ENCODE measurements at regions of chr12 and their contacts with region 1.

Region 1: GRCh38 chr12:121668750-121669520 is 519 bp downstream of the MORN3 start:
- DNase-seq: peak; percentile 81
- ATAC-seq: no peak
- H3K4me3 Mint-ChIP-seq: no peak overlapping the region
- H3K27ac Mint-ChIP-seq: peak overlapping the region; percentile 2
- H3K4me1 Mint-ChIP-seq: peaks cover 48% of the 10 kb centered on the region
- H3K27me3 Mint-ChIP-seq: no peaks in the 10 kb centered on the region
- CTCF ChIP-seq: peak; percentile 80

Region 2: DNA sequence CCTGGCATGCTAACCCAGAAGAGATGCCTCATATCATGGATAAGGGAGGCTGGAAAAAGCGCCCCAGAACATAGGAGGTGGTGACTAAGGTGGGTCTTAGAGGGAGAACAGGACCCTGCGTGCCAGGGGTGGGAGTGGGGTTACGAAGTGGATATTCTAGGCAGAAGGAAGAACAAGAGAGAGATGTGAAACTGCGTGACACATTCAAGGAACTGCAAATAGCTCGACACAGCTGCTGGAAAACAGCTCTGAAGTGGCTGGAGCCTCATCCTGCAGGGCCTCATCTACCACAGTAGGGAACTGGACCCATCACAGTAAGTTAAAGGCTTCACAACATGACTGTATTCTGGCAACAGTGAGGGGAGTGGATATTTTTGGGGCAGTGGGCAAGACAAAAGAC is 207.9 kb before region 1 on chr12:
- CTCF ChIA-PET with region 1: no interaction called
- POLR2A ChIA-PET with region 1: no interaction called
- intact Hi-C with region 1: no loop called
- DNase-seq: no peak
- ATAC-seq: no peak
- H3K4me3 Mint-ChIP-seq: no peak overlapping the region
- H3K27ac Mint-ChIP-seq: peak overlapping the region; percentile 11
- H3K4me1 Mint-ChIP-seq: peaks cover 63% of the 10 kb centered on the region
- H3K27me3 Mint-ChIP-seq: no peaks in the 10 kb centered on the region
- CTCF ChIP-seq: no peak

Region 3: GRCh38 chr12:121494093-121494787 is 174.7 kb before region 1 on chr12:
- CTCF ChIA-PET with region 1: interaction called, 14 read pairs
- POLR2A ChIA-PET with region 1: no interaction called
- intact Hi-C with region 1: no loop called
- DNase-seq: peak; percentile 72
- ATAC-seq: peak; percentile 62
- H3K4me3 Mint-ChIP-seq: no peak overlapping the region
- H3K27ac Mint-ChIP-seq: no peak overlapping the region
- H3K4me1 Mint-ChIP-seq: peaks cover 18% of the 10 kb centered on the region
- H3K27me3 Mint-ChIP-seq: no peaks in the 10 kb centered on the region
- CTCF ChIP-seq: peak; percentile 90

Region 4: GRCh38 chr12:121550974-121551634 is 117.8 kb before region 1 on chr12:
- CTCF ChIA-PET with region 1: interaction called, 32 read pairs
- POLR2A ChIA-PET with region 1: interaction called, 3 read pairs
- intact Hi-C with region 1: no loop called
- DNase-seq: no peak
- ATAC-seq: no peak
- H3K4me3 Mint-ChIP-seq: no peak overlapping the region
- H3K27ac Mint-ChIP-seq: no peak overlapping the region
- H3K4me1 Mint-ChIP-seq: peaks cover 17% of the 10 kb centered on the region
- H3K27me3 Mint-ChIP-seq: no peaks in the 10 kb centered on the region
- CTCF ChIP-seq: no peak

Region 5: GRCh38 chr12:121657305-121658008 is 11.5 kb before region 1 on chr12:
- CTCF ChIA-PET with region 1: interaction called, 16 read pairs
- POLR2A ChIA-PET with region 1: interaction called, 4 read pairs
- intact Hi-C with region 1: no loop called
- DNase-seq: peak; percentile 36
- ATAC-seq: peak; percentile 22
- H3K4me3 Mint-ChIP-seq: no peak overlapping the region
- H3K27ac Mint-ChIP-seq: peak overlapping the region; percentile 50
- H3K4me1 Mint-ChIP-seq: peaks cover 53% of the 10 kb centered on the region
- H3K27me3 Mint-ChIP-seq: no peaks in the 10 kb centered on the region
- CTCF ChIP-seq: no peak

Region 6: DNA sequence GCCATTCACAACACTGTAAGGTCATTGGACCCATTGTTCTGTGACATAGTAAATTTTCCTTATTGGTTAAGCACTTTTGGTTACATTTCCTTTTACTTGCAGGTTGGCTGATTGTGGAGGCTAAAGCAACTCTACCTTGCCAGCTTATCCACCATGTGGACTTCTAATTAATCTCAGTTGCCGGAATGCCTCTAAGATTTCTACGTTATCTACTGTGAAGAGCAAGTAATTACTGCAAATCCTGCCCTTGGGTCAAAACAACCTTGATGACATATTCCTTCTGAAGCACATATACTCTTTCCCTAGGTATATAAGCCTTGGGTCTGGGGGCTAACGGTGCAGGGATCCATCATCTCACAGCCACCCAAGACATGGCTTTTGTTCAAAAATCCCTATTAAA is 20.0 kb after region 1 on chr12:
- CTCF ChIA-PET with region 1: interaction called, 10 read pairs
- POLR2A ChIA-PET with region 1: no interaction called
- intact Hi-C with region 1: no loop called
- DNase-seq: no peak
- ATAC-seq: no peak
- H3K4me3 Mint-ChIP-seq: no peak overlapping the region
- H3K27ac Mint-ChIP-seq: no peak overlapping the region
- H3K4me1 Mint-ChIP-seq: peaks cover 5% of the 10 kb centered on the region
- H3K27me3 Mint-ChIP-seq: no peaks in the 10 kb centered on the region
- CTCF ChIP-seq: no peak